GM12878 (cell line): ENCODE measurements at regions of chr15 and their contacts with region 1.

Region 1: DNA sequence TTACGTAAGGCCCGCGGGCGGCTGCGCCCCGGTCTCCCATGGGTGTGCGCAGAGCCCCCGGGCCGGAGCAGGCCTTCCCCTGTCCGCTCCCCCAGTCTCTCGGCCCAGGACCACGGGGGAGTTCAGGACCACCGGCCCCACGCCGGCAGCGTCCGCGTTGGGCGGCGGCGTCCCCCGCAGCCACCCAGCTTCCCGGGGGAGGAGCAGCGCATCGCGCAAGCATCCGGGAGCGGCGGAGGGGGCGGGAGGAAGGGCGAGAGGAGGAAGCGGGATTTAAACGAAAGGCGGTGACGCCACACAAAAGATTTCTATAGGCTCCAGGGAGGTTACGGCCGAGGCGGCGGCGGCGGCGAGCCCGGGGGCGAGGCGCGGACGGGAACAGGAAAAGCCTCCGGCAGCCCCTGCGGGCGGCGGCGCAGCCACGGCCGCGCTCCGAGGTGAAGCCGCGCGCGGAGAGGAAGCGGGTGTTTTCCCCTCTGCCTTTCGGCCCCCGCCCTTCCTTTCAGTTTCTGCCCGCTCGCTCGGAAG is at the start of gene TLNRD1:
- DNase-seq: no peak
- ATAC-seq: peak; percentile 74
- H3K4me3 ChIP-seq: peak within 1 kb of the TSS; percentile 87
- H3K27ac ChIP-seq: peak within 1 kb of the TSS; percentile 92
- H3K4me1 ChIP-seq: peaks cover 19% of the 10 kb centered on the region
- H3K27me3 ChIP-seq: no peaks in the 10 kb centered on the region
- CTCF ChIP-seq: no peak
- EP300 ChIP-seq: no peak
- POLR2A ChIP-seq: peak; percentile 92
- RAD21 ChIP-seq: no peak
- polyA plus RNA-seq, gene TLNRD1: 2.5 to 5.7 TPM

Region 2: DNA sequence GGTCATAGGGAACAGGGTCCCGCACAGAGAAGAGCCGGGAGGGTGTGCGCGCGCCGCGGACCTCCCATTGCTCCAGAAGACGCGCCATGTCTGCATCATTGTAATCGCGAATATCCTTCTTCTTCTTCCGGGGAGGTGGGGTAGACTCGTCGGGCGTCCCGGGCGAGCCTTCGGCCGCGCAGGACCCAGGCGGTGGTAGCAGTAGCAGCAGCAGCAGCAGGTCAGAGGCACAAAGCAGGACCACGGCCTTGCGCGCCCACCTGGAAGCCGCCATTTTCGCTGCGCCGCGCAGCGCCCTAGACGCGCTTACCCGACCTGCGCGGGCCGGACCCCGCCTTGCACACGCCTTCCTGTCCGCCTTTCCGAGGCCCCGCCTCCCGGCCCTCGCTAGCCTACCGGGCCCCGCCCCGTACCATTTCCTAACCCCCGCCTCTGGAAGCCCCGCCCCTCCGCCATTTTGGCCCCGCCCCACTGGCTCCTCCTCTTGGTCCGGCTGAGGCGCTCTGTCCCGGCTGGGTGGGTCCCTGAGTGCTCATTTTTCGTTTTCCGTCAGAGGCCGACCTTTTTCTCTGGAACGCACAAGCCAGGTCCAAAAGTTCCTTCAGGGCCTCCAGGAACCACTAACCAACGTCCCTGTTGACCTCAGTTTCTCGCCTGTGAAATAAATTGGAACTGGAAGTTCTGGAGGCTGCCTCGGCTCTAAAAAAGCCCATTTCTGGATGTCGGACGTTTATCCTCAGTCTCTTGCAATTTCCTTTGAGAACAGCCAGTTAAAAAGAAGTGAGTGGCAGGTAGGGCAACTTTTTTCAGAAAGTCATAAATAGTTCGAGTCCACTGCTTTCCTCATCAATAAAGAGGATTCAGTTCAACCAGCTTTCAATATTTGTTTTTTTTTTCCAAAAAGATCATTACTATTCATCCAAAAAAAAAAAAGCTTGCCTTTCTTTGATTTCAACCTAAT is 10.9 kb before region 1 on chr15 and contains the start of gene MESD:
- CTCF ChIA-PET with region 1: interaction called, 3 read pairs
- POLR2A ChIA-PET with region 1: interaction called, 12 read pairs
- RAD21 ChIA-PET with region 1: interaction called, 6 read pairs
- SMC1A ChIA-PET with region 1: interaction called, 9 read pairs
- in situ Hi-C with region 1: no loop called
- intact Hi-C with region 1: loop called (anchors 1 kb)
- DNase-seq: peak; percentile 70
- ATAC-seq: peak; percentile 97
- H3K4me3 ChIP-seq: peak within 1 kb of the TSS; percentile 94
- H3K27ac ChIP-seq: peak within 1 kb of the TSS; percentile 80
- H3K4me1 ChIP-seq: peaks cover 4% of the 10 kb centered on the region
- H3K27me3 ChIP-seq: no peaks in the 10 kb centered on the region
- CTCF ChIP-seq: no peak
- EP300 ChIP-seq: no peak
- POLR2A ChIP-seq: peak; percentile 99
- RAD21 ChIP-seq: no peak
- polyA plus RNA-seq, gene MESD: 10.2 to 16.7 TPM

Region 3: GRCh38 chr15:81023483-81024264 is 23.0 kb after region 1 on chr15:
- CTCF ChIA-PET with region 1: interaction called, 4 read pairs
- POLR2A ChIA-PET with region 1: interaction called, 7 read pairs
- RAD21 ChIA-PET with region 1: interaction called, 13 read pairs
- SMC1A ChIA-PET with region 1: interaction called, 8 read pairs
- in situ Hi-C with region 1: no loop called
- intact Hi-C with region 1: loop called (anchors 1 kb)
- DNase-seq: peak; percentile 97
- ATAC-seq: peak; percentile 92
- H3K4me3 ChIP-seq: peak overlapping the region; percentile 22; the same call in 1 of the 2 replicates
- H3K27ac ChIP-seq: peak overlapping the region; percentile 91
- H3K4me1 ChIP-seq: peaks cover 41% of the 10 kb centered on the region
- H3K27me3 ChIP-seq: no peaks in the 10 kb centered on the region
- CTCF ChIP-seq: no peak
- EP300 ChIP-seq: peak; percentile 96 to 100
- POLR2A ChIP-seq: peak; percentile 59
- RAD21 ChIP-seq: no peak

Region 4: DNA sequence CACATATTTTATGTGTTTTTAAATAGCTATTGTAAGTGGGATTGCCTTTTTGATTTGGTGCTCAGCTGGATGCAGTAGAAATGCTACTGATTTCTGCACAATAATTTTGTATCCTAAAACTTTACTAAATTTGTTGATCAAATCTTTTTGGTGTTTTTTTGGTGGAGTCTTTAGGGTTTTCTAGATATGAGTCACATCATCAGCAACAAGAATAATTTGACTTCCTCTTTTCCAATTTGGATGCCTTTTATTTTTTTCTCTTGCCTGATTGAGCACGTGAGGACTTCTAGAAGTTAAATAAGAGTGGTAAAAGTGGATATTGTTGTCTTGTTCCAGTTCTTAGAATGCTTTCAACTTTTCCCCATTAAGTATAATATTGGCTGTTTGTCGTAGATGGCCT is 51.4 kb after region 1 on chr15:
- CTCF ChIA-PET with region 1: no interaction called
- POLR2A ChIA-PET with region 1: interaction called, 3 read pairs
- RAD21 ChIA-PET with region 1: no interaction called
- SMC1A ChIA-PET with region 1: no interaction called
- in situ Hi-C with region 1: no loop called
- intact Hi-C with region 1: loop called (anchors 2 kb)
- DNase-seq: no peak
- ATAC-seq: peak; percentile 50
- H3K4me3 ChIP-seq: no peak overlapping the region
- H3K27ac ChIP-seq: no peak overlapping the region
- H3K4me1 ChIP-seq: peaks cover 13% of the 10 kb centered on the region
- H3K27me3 ChIP-seq: no peaks in the 10 kb centered on the region
- CTCF ChIP-seq: no peak
- EP300 ChIP-seq: 0 out of 4 replicates have a peak, but pooled peaks of 1 of the 2 experiments have one; percentile 47
- POLR2A ChIP-seq: no peak
- RAD21 ChIP-seq: no peak